MCF 10A (cell line): ENCODE measurements at regions of chr4 and their contacts with region 1.

Region 1: GRCh38 chr4:150217192-150217591 is 138.9 kb downstream of the DCLK2 start:
- DNase-seq: peak; percentile 61
- H3K4me3 Mint-ChIP-seq: no peak overlapping the region
- H3K27ac Mint-ChIP-seq: no peak overlapping the region
- H3K4me1 Mint-ChIP-seq: peaks cover 16% of the 10 kb centered on the region
- H3K27me3 Mint-ChIP-seq: no peaks in the 10 kb centered on the region
- CTCF ChIP-seq: peak; percentile 49

Region 2: GRCh38 chr4:149987330-149988086 is 229.7 kb before region 1 on chr4:
- CTCF ChIA-PET with region 1: interaction called, 27 read pairs
- POLR2A ChIA-PET with region 1: no interaction called
- intact Hi-C with region 1: no loop called
- DNase-seq: no peak
- H3K4me3 Mint-ChIP-seq: no peak overlapping the region
- H3K27ac Mint-ChIP-seq: no peak overlapping the region
- H3K4me1 Mint-ChIP-seq: no peaks in the 10 kb centered on the region
- H3K27me3 Mint-ChIP-seq: no peaks in the 10 kb centered on the region
- CTCF ChIP-seq: no peak

Region 3: GRCh38 chr4:149999485-150000074 is 217.6 kb before region 1 on chr4:
- CTCF ChIA-PET with region 1: interaction called, 223 read pairs
- POLR2A ChIA-PET with region 1: no interaction called
- intact Hi-C with region 1: no loop called
- DNase-seq: peak; percentile 69
- H3K4me3 Mint-ChIP-seq: no peak overlapping the region
- H3K27ac Mint-ChIP-seq: no peak overlapping the region
- H3K4me1 Mint-ChIP-seq: peaks cover 22% of the 10 kb centered on the region
- H3K27me3 Mint-ChIP-seq: no peaks in the 10 kb centered on the region
- CTCF ChIP-seq: peak; percentile 63

Region 4: DNA sequence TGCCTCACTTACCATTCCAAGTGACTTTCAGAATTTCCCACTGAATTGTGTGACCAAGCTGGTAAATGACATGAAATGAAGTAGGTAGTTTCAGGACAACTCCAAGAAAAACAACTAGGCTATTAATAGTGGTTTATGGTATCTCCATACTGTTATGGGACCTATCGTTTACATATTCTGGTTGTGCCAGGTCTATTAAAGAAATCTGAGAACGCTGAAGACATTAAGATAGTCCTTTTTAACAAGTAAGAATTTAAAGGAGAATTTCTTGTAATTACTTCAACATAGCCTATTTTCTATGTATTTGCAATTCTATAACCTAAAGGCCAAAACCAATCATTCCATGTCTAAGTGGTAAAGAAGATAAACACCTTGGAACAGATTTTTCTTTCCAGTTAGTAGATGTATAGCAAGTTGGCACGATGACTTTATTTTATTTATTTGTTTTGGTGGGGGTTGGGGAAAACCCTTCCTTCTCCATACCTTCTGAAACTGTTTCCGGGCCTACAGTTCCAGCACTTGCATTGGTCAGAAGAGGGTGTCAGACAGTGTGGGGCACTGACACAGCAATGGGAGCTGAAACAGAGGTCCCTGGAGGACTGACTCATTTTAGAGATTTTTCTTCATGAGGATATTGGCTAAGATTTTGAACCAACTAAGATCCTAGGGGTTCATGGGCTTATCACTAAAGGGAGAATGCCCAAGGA is 146.6 kb before region 1 on chr4:
- CTCF ChIA-PET with region 1: no interaction called
- POLR2A ChIA-PET with region 1: no interaction called
- intact Hi-C with region 1: no loop called
- DNase-seq: peak; percentile 68
- H3K4me3 Mint-ChIP-seq: no peak overlapping the region
- H3K27ac Mint-ChIP-seq: no peak overlapping the region
- H3K4me1 Mint-ChIP-seq: peaks cover 8% of the 10 kb centered on the region
- H3K27me3 Mint-ChIP-seq: no peaks in the 10 kb centered on the region
- CTCF ChIP-seq: no peak

Region 5: DNA sequence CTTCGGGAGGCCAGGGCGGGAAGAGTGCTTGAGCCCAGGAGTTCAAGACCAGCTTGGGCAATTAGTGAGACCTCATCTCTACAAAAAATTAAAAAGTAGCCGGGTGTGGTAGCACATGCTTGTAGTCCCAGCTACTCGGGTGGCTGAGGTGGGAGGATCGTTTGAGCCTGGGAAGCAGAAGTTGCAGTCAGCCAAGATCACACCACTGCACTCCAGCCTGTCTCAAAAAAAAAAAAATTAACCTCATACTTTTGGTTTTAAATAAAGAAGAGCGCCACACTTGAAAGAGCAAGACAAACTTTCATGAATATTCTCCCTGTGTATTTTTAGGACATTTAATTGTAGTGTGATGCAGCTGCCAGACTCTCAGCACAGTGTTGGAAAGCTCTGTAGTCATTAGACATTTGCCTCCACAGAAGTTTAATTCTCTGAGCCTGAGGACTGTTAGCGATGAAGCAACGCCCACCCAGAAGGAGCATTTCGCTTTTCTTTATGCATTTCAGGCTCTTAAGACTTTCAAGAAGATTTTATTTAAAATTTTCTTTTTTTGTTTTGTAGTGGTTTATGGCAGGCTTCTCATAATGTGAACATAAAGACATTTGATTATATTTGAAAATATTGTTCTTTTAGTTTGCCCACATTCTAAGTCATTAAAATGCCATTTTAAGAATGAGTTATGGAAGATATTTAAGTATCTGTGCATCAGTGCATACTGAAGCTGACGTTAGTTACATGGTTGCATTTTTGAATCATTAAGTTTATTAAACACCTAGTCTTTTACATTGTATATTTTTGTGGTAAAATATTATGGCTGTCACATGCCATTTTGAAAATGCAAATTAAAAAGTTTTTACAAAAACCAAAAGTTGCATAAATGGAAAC is 93.2 kb before region 1 on chr4:
- CTCF ChIA-PET with region 1: no interaction called
- POLR2A ChIA-PET with region 1: no interaction called
- intact Hi-C with region 1: no loop called
- DNase-seq: no peak
- H3K4me3 Mint-ChIP-seq: no peak overlapping the region
- H3K27ac Mint-ChIP-seq: no peak overlapping the region
- H3K4me1 Mint-ChIP-seq: peaks cover 30% of the 10 kb centered on the region
- H3K27me3 Mint-ChIP-seq: no peaks in the 10 kb centered on the region
- CTCF ChIP-seq: no peak

Region 6: GRCh38 chr4:150229523-150229922 is 12.3 kb after region 1 on chr4:
- CTCF ChIA-PET with region 1: interaction called, 11 read pairs
- POLR2A ChIA-PET with region 1: interaction called, 3 read pairs
- intact Hi-C with region 1: no loop called
- DNase-seq: peak; percentile 80
- H3K4me3 Mint-ChIP-seq: no peak overlapping the region
- H3K27ac Mint-ChIP-seq: no peak overlapping the region
- H3K4me1 Mint-ChIP-seq: peaks cover 24% of the 10 kb centered on the region
- H3K27me3 Mint-ChIP-seq: no peaks in the 10 kb centered on the region
- CTCF ChIP-seq: no peak

Region 7: DNA sequence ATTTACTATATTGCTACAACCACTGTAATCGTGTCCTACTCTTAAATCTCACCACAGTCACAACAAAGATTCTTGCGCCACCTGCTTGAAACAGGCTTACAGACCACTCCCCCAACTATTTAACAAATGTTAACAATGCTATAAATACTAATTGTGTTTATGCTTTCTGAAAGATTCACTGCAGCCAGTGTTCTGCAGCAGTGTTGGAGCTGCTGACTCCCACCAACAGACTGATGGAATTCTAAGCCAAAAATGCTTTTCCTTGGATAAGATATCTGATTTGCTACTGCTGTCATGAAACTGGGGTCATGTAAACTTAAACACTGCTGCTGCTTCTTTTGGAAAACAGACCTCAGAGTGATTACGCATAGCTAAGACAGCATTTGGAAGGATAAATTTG is 120.5 kb after region 1 on chr4:
- CTCF ChIA-PET with region 1: no interaction called
- POLR2A ChIA-PET with region 1: no interaction called
- intact Hi-C with region 1: no loop called
- DNase-seq: no peak
- H3K4me3 Mint-ChIP-seq: no peak overlapping the region
- H3K27ac Mint-ChIP-seq: no peak overlapping the region
- H3K4me1 Mint-ChIP-seq: no peaks in the 10 kb centered on the region
- H3K27me3 Mint-ChIP-seq: no peaks in the 10 kb centered on the region
- CTCF ChIP-seq: no peak